Activated naive CD4-positive, alpha-beta T cell treated with anti-CD3 and anti-CD28 coated beads for 36 hours (primary cell): ENCODE measurements at regions of chr10 and their contacts with region 1.

Region 1: GRCh38 chr10:30413996-30414576 is 19.9 kb upstream of the MAP3K8 start:
- DNase-seq: peak; percentile 43
- H3K4me3 Mint-ChIP-seq: no peak overlapping the region
- H3K27ac Mint-ChIP-seq: no peak overlapping the region
- H3K4me1 Mint-ChIP-seq: peaks cover 15% of the 10 kb centered on the region
- H3K27me3 Mint-ChIP-seq: no peaks in the 10 kb centered on the region

Region 2: DNA sequence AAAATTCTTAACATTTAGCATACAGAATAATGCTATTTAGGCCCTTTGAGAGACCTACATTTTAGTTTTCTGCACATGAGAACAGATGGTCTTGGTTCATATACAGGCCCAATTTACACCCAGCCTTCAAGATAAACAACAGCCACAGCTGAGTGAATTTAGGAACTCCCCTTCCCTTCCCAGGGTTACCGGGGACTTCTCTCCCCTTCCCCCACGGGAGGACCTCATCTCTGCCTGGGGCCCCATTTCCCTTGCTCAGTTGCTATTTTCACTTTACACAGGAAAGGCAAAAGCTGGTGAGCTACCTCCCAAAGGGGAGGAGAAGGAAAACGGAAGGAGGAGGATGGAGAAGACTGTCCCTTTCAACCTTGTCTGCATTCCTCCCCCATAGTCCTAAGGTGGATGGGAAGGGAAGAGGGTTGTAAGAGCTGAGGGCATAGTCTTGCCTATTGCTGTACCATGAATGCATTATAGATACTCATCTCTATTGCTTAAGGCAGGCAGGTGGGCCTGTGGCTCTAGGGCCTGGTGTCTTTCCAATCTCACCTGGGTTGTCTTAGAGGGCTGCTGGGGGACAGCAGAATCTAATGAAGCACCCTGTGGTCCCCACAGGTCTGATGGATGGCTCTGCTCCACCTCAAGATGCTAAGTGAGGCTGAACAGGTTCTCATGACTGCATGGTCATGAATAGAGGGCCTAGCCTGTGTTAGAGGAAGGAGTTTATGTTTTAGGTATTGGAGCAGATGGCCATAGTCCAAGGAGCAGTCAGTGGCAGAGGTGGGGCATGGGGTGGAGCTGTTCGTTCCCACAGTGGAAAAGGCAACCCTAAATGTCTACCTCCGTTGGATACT is 13.7 kb after region 1 on chr10:
- CTCF ChIA-PET with region 1: interaction called, 4 read pairs
- intact Hi-C with region 1: loop called (anchors 1 kb)
- DNase-seq: peak; percentile 46
- H3K4me3 Mint-ChIP-seq: no peak overlapping the region
- H3K27ac Mint-ChIP-seq: no peak overlapping the region
- H3K4me1 Mint-ChIP-seq: peaks cover 15% of the 10 kb centered on the region
- H3K27me3 Mint-ChIP-seq: no peaks in the 10 kb centered on the region

Region 3: GRCh38 chr10:30529373-30529998 is 115.4 kb after region 1 on chr10:
- CTCF ChIA-PET with region 1: interaction called, 73 read pairs
- intact Hi-C with region 1: loop called (anchors 1 kb)
- DNase-seq: peak; percentile 88
- H3K4me3 Mint-ChIP-seq: peak overlapping the region; percentile 73
- H3K27ac Mint-ChIP-seq: peak overlapping the region; percentile 85
- H3K4me1 Mint-ChIP-seq: peaks cover 52% of the 10 kb centered on the region
- H3K27me3 Mint-ChIP-seq: no peaks in the 10 kb centered on the region